ENCODE measurements at regions of chr5 and their contacts with region 1.

Region 1: DNA sequence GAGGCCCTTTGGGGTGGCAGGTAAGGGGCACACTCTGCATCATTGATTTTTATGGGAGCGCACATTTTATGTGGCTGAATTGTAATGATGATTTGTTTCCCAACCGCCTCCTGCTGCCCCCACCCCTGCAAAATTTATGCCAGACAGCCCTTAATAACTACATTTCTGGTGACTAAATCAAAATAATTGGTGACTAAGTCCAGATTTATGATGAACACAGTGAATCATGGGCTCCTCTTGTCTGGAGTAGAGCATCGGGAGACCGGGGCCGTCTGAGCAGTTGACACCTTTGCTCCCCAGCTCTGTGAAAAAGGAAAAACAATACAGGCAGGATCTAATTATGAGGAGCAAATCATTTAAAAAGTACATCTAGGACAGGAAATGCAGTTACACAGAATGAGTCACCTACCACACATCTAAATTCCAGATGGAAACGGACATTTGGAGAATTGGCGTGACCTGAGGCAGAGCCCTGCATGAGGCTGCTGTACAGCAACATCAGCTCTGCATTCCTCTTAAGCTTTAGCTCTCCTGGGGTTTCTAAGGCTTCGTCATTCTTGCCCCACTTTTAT is 58.9 kb downstream of the DOCK2 start:
- DNase-seq: no peak
- ATAC-seq: peak in 2 of 8 donors; percentile 37 to 42
- H3K4me3 ChIP-seq: no peak overlapping the region
- H3K27ac ChIP-seq: no peak overlapping the region
- H3K4me1 ChIP-seq: peaks cover 0 to 7% (median 0%) of the 10 kb centered on the region in 9 donors
- H3K27me3 ChIP-seq: peaks cover 0 to 6% (median 0%) of the 10 kb centered on the region in 7 donors
- CTCF ChIP-seq: no peak

Region 2: DNA sequence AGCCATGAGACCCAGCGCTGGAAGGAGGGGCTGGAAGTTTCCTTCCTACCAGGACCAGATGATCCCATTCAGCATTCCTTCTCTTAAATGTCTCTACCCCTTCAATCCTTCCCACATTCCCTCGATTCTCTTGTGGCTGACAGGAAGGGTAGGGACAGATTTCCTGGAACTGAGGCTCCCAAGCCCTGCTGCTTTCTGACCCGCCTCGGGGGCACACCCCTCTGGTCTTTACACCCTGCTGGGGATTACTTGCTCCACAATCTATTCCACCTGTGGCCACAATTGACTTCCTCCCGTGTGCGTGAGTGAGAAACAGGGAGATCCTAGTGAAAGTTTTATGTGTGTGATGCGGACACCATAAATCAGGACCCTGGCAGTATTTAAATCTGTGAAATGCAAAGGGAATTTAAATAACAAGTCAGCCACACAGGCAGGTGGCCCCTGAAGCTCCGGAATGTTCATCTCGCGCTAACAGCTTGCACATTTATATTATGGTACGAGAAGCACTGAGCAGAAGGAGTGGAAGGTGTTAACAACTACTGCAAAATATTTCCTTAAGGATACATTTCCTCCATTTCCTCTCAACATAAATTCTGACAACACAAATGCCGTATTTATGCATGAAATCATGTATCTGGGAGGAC is 632.6 kb before region 1 on chr5:
- intact Hi-C with region 1: no loop called
- DNase-seq: no peak
- ATAC-seq: no peak
- H3K4me3 ChIP-seq: no peak overlapping the region
- H3K27ac ChIP-seq: no peak overlapping the region
- H3K4me1 ChIP-seq: peaks cover 0 to 30% (median 12%) of the 10 kb centered on the region in 9 donors
- H3K27me3 ChIP-seq: peaks cover 0 to 6% (median 0%) of the 10 kb centered on the region in 7 donors
- CTCF ChIP-seq: no peak

Region 3: DNA sequence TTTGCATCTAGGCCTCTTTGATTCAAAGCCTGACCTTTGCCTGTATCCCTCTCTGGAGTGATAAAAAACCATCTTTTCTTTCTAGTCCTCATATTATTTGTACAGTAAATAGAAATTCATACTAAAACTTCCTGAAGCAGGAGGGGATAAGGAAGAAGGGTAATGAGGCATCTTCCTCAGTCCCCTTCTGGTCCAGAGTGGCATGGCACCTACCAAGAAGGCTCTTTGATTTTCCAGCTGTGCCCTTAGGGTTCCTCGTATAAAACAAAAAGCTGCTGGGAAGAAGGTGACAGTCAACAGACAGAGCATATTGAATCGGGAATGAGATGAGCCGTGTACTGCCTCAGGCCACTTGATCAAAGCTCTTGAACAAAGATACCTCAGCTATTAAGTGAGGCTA is 184.3 kb before region 1 on chr5:
- intact Hi-C with region 1: no loop called
- DNase-seq: no peak
- ATAC-seq: no peak
- H3K4me3 ChIP-seq: no peak overlapping the region
- H3K27ac ChIP-seq: no peak overlapping the region
- H3K4me1 ChIP-seq: no peaks in the 10 kb centered on the region
- H3K27me3 ChIP-seq: no peaks in the 10 kb centered on the region
- CTCF ChIP-seq: no peak

Region 4: DNA sequence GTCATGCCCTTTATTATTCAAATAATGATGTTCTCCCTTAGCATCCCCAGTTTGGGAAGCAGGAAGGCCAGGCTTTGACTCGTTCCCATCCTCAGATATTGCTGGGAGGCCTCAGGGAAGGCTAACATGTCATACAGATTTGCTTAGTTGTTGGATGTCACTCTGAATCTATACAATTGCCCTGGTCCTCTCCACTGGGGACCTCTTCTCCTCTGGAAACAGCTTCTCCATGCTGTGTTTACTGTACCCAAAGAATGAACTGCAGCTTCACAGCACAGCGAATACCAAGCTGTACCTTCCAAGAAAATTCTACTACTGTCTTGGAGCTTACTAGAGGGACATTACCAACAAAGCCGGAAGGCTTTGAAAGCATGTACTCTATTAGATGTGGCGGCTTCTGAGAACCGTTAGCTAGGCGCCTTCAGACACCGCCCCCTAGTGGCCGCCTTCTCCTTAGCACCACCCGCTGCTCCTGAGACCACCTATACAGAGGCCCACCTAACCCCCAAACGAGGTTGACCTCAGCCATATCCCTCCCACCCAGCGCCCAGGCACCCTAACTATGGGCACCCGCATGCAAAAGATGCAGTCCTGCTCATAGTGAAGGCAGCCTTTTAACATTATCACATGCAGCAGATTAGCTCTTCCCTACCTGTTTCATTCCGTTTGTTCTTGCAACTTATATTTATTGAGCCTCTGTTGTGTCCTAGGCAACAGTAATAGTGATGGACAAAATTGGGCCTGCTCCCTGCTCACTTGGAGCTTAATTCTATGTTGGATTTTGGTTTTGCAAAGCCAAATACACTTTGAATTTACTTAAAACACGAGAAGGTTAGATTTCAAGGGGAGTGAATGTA is 374.8 kb after region 1 on chr5:
- intact Hi-C with region 1: loop called in 7 of 10 experiments (anchors 5 to 10 kb)
- DNase-seq: peak; percentile 9 to 43
- ATAC-seq: peak in 6 of 8 donors; percentile 38 to 73 (median 58)
- H3K4me3 ChIP-seq: no peak overlapping the region
- H3K27ac ChIP-seq: no peak overlapping the region
- H3K4me1 ChIP-seq: no peaks in the 10 kb centered on the region
- H3K27me3 ChIP-seq: peaks cover 0 to 24% (median 2%) of the 10 kb centered on the region in 7 donors
- CTCF ChIP-seq: peak; percentile 40 to 76 (median 72)